ENCODE measurements at regions of chr5 and their contacts with region 1.

Region 1: GRCh38 chr5:145797336-145797735 is 37.8 kb downstream of the PRELID2 start:
- DNase-seq: peak; percentile 73
- H3K4me3 ChIP-seq: no peak overlapping the region
- H3K27ac ChIP-seq: peak overlapping the region; percentile 39
- H3K4me1 ChIP-seq: peaks cover 13% of the 10 kb centered on the region
- H3K27me3 ChIP-seq: no peaks in the 10 kb centered on the region
- CTCF ChIP-seq: peak in 1 of 2 donors; percentile 12
- POLR2A ChIP-seq: no peak

Region 2: GRCh38 chr5:145752947-145753346 is 44.4 kb before region 1 on chr5:
- CTCF ChIA-PET with region 1: no interaction called
- POLR2A ChIA-PET with region 1: no interaction called
- dilution Hi-C with region 1: no loop called
- intact Hi-C with region 1: loop called (anchors 2 kb)
- DNase-seq: peak; percentile 76
- H3K4me3 ChIP-seq: peak overlapping the region in 1 of 3 experiments; percentile 27
- H3K27ac ChIP-seq: peak overlapping the region; percentile 51
- H3K4me1 ChIP-seq: peaks cover 27% of the 10 kb centered on the region
- H3K27me3 ChIP-seq: no peaks in the 10 kb centered on the region
- CTCF ChIP-seq: no peak
- POLR2A ChIP-seq: no peak

Region 3: DNA sequence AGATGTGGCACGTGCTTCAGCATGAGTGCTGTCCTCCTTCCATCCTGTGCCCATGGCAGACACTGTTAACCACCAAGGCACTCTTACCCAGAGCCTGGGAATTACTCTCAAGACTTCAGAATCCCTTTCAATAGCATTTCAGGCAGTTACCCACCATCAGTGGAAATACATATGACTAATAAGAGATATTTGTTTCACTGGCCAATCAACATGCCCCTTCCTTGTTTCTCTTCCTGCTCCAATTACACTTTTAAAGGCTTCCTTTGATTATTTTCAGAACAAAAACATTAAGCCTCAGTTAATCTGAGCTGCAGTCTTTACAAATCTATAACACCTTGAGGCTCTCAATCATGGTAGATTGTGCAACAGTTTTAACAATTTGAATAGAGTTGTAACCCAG is 33.0 kb before region 1 on chr5:
- CTCF ChIA-PET with region 1: no interaction called
- POLR2A ChIA-PET with region 1: no interaction called
- dilution Hi-C with region 1: no loop called
- intact Hi-C with region 1: no loop called
- DNase-seq: peak; percentile 47
- H3K4me3 ChIP-seq: no peak overlapping the region
- H3K27ac ChIP-seq: no peak overlapping the region
- H3K4me1 ChIP-seq: peaks cover 3% of the 10 kb centered on the region
- H3K27me3 ChIP-seq: no peaks in the 10 kb centered on the region
- CTCF ChIP-seq: no peak
- POLR2A ChIP-seq: no peak

Region 4: DNA sequence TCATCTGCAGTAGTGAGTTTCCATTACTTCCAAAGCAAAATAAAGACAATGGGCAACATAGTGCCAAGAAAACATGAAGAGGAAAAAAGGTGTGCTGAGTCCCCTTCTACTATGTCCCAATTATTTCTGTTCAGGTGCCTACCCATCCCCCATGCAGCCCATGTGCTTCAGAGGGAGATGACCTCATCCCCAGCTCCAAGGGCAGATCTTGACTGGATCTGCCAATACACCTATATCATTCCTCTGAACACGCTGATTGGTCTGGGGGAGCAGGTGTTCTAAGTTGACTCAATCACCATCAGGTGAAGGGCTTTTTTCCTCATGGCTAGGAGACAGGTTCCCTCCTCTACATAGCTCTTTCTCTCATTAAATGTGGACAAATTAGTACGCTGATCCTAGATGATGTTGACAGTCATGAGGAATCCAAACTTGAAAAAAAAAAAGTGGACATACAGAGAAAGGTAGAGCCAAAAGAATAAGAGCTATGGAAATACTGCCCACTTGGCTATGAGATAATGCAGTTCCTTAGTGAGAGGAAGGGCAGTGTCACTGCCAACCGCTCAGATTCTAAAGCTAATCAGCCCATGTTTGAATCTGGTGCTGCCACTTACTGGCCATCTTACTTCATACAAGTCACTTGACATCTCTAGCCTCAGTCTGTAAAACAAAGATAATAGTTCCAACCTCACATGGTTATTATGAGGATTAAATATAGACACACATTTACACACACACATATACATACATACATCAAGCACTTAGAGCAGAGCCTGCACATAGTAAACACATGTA is 14.7 kb after region 1 on chr5:
- CTCF ChIA-PET with region 1: interaction called, 12 read pairs
- POLR2A ChIA-PET with region 1: no interaction called
- dilution Hi-C with region 1: no loop called
- intact Hi-C with region 1: loop called (anchors 1 kb)
- DNase-seq: peak; percentile 69
- H3K4me3 ChIP-seq: no peak overlapping the region
- H3K27ac ChIP-seq: no peak overlapping the region
- H3K4me1 ChIP-seq: no peaks in the 10 kb centered on the region
- H3K27me3 ChIP-seq: no peaks in the 10 kb centered on the region
- CTCF ChIP-seq: peak; percentile 27 to 43
- POLR2A ChIP-seq: no peak